Endothelial cell of umbilical vein (primary cell): ENCODE measurements at regions of chr19 and their contacts with region 1.

Region 1: DNA sequence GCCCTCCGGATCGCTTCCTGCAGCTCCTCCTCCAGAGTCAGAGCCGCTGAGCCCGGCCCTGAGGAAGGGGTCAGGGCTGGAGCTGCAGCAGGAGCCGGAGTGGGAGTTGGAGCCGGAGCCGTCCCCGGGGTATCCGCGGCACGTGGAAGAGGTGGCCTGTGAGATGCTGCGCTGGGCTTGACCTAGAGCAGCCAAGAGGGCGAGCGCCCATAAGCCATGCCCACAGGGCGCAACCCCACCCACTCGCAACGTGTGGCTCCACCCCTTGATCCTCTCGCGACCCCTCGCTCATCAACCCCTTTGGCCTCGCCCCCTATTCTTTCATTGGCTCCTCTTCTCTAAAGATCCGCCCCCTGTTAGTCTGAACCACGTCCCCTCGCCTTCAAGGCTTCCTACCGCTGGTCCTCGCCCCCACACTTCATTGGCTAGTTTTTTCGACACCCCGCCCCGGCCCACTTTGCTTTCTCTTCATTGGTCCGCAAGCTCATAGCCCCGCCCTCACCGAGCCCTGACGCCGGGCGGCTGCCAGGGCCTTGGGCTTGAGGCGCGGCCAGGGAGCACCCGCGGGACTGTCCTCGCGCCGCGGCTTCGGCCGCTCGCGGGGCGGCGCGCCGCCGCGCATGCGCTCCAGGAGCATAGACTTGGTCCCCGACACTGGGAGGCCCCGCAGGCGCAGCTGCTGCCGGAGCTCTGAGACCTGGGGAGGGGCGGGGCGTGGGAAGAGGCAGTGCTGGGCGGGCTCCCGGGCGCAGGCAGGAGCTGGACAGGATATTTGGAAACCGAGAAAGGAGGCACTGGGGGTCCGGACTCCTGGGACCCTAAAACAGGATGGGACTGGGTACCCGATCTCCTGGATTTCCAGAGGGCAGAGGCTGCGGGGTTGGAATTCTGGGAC is 5.4 kb downstream of the MAMSTR start:
- DNase-seq: peak; percentile 100
- H3K4me3 ChIP-seq: peak overlapping the region; percentile 37 to 63 (median 50)
- H3K27ac ChIP-seq: peak overlapping the region; percentile 52
- H3K4me1 ChIP-seq: peaks cover 15% of the 10 kb centered on the region
- H3K27me3 ChIP-seq: no peaks in the 10 kb centered on the region
- CTCF ChIP-seq: no peak
- POLR2A ChIP-seq: no peak

Region 2: GRCh38 chr19:48698046-48698445 is 16.1 kb before region 1 on chr19:
- CTCF ChIA-PET with region 1: interaction called, 12 read pairs
- POLR2A ChIA-PET with region 1: no interaction called
- dilution Hi-C with region 1: no loop called
- intact Hi-C with region 1: no loop called
- DNase-seq: peak; percentile 60
- H3K4me3 ChIP-seq: no peak overlapping the region
- H3K27ac ChIP-seq: no peak overlapping the region
- H3K4me1 ChIP-seq: peaks cover 16% of the 10 kb centered on the region
- H3K27me3 ChIP-seq: no peaks in the 10 kb centered on the region
- CTCF ChIP-seq: no peak
- POLR2A ChIP-seq: no peak

Region 3: GRCh38 chr19:48724796-48725753 is 11.0 kb after region 1 on chr19:
- CTCF ChIA-PET with region 1: interaction called, 19 read pairs
- POLR2A ChIA-PET with region 1: interaction called, 8 read pairs
- dilution Hi-C with region 1: no loop called
- intact Hi-C with region 1: loop called (anchors 1 kb)
- DNase-seq: peak; percentile 100
- H3K4me3 ChIP-seq: no peak overlapping the region
- H3K27ac ChIP-seq: peak overlapping the region; percentile 97
- H3K4me1 ChIP-seq: peaks cover 33% of the 10 kb centered on the region
- H3K27me3 ChIP-seq: no peaks in the 10 kb centered on the region
- CTCF ChIP-seq: no peak
- POLR2A ChIP-seq: no peak